ENCODE measurements at regions of chr6 and their contacts with region 1.

Region 1: DNA sequence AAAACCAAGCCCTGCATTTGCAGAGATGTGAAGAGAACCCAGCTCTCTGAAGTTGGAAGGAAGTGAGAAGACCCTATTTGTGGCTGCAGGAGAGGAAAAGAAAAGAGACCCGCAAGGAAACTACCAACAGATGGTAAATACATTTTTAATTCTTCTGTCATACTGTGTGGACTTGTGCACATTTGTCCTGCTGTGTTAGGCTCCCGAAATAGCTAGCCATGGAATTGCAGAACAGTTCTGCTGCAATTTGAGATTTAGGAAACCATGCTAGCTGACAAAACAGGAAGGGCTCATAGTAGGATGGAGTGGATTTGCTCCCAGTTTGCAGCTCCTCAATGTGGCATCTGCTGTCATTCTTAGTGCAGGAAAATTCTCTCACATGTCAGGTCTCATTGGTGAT is 12.1 kb upstream of the ATXN1 start:
- DNase-seq: no peak
- ATAC-seq: no peak
- H3K4me3 ChIP-seq: no peak overlapping the region
- H3K27ac ChIP-seq: peak overlapping the region; percentile 32; the same call in 1 of the 2 replicates
- H3K4me1 ChIP-seq: peaks cover 35% of the 10 kb centered on the region
- H3K27me3 ChIP-seq: no peaks in the 10 kb centered on the region
- CTCF ChIP-seq: no peak

Region 2: DNA sequence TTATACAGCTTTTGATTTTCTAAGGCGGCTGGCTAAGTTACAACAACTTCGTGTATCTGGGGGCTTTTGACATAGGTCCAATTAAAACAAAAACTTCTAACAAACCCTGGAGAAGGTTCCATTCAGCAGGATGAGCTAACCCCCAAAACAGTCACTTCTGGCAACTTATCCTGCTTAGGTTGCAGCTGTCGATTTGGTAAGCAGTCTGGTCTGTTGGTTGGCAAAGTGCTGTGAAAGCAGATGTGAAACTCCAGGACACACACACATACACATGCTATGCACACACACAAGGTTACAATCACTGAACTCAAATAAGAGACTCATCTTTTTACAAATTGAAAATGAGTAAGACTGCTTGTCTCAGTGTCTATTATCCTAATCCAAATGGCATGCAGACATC is 209.4 kb after region 1 on chr6:
- CTCF ChIA-PET with region 1: no interaction called
- POLR2A ChIA-PET with region 1: interaction called, 10 read pairs
- in situ Hi-C with region 1: no loop called
- intact Hi-C with region 1: no loop called
- DNase-seq: no peak
- ATAC-seq: no peak
- H3K4me3 ChIP-seq: no peak overlapping the region
- H3K27ac ChIP-seq: no peak overlapping the region
- H3K4me1 ChIP-seq: no peaks in the 10 kb centered on the region
- H3K27me3 ChIP-seq: peaks cover 41% of the 10 kb centered on the region
- CTCF ChIP-seq: no peak